H1 (cell line): ENCODE measurements at regions of chr16 and their contacts with region 1.

Region 1: DNA sequence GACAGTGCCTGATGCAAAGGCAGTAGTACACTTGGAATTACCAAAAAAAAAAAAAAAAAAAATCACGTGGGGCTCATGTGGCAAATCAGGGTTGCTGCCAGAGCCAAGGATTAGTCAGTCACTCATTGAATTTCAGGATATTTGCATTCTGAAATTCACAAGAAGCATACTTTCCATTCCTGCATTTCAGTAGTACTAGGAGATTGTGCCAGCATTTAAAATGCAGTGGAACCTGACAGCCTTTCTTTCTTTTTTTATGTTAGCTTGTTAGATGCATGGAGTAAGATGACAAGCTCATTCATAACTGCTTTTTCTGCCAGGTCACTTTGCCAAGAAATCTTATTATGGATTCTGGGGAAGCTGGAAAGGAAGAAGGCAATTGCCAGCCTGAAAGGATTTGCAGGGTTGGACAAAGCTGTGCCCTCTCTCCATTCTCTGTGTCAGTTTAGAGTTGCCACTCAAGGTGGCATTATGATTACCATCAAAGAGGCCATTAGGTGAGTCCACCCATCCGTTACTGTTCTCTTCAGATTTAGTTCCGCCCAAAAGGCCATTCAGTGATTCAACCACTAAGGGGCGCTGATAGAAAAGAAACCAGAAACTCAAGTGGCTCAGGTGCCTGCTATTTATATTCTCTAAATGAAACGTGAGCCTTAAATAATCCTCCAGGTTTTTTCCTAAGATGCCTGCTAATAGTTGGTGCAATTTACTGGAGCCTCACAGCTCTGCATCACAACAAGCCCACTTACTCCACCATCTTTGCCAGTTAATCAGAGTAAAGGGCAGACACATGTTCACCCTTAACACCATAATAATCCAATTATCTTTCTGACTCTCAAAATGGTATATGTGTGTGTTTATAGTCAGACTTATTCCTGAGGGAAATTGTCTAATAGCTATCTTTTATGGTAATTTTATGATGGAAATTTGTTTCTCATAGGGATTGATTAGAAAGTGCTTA is 59.0 kb downstream of the TANGO6 start:
- DNase-seq: peak in 1 of 2 experiments; percentile 63
- H3K4me3 ChIP-seq: no peak overlapping the region
- H3K27ac ChIP-seq: no peak overlapping the region
- H3K4me1 ChIP-seq: 0 out of 7 replicates have a peak, but pooled peaks cover 0 to 1% (median 0%) of the 10 kb centered on the region in 4 experiments
- H3K27me3 ChIP-seq: no peaks in the 10 kb centered on the region
- CTCF ChIP-seq: peak in 2 of 3 experiments; percentile 74 to 86; a peak in 3 of 4 replicates
- EP300 ChIP-seq: no peak
- POLR2A ChIP-seq: no peak
- RAD21 ChIP-seq: peak; percentile 96 to 98

Region 2: GRCh38 chr16:68843482-68844210 is 58.6 kb before region 1 on chr16 and contains the start of gene TANGO6:
- CTCF ChIA-PET with region 1: interaction called, 17 read pairs
- POLR2A ChIA-PET with region 1: no interaction called
- DNase-seq: peak; percentile 49 to 94
- H3K4me3 ChIP-seq: peak within 1 kb of the TSS; percentile 72 to 91 (median 80)
- H3K27ac ChIP-seq: peak within 1 kb of the TSS; percentile 69
- H3K4me1 ChIP-seq: no peaks in the 10 kb centered on the region
- H3K27me3 ChIP-seq: no peaks in the 10 kb centered on the region
- CTCF ChIP-seq: peak; percentile 52 to 63 (median 58)
- EP300 ChIP-seq: no peak
- POLR2A ChIP-seq: peak; percentile 82 to 83
- RAD21 ChIP-seq: peak; percentile 34 to 40; a peak in 3 of 4 replicates
- total RNA-seq, gene TANGO6: 15.8 and 19.5 TPM in 2 replicates

Region 3: DNA sequence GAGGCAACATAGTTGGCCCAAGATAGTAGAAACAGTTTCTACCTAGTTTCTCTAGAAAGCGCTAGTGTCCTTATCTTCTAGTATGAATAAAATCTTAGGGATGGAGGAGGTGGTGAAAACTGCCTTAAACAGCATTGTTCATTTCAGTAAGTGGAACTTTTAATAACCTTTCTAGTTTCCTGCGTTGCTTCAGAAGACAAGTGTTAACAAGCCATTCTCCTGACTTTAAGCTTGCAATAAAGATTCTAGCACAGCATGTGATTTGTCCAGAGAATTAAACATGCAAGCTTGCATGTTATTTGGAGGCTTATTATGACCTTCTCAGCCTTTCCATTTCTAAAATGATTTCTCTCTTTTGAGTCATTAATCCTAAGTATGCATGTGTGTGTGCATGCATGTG is 13.3 kb after region 1 on chr16:
- CTCF ChIA-PET with region 1: interaction called, 15 read pairs
- POLR2A ChIA-PET with region 1: no interaction called
- DNase-seq: no peak
- H3K4me3 ChIP-seq: no peak overlapping the region
- H3K27ac ChIP-seq: no peak overlapping the region
- H3K4me1 ChIP-seq: peaks cover 0 to 2% (median 0%) of the 10 kb centered on the region in 4 experiments; a peak in 1 of 7 replicates
- H3K27me3 ChIP-seq: no peaks in the 10 kb centered on the region
- CTCF ChIP-seq: no peak
- EP300 ChIP-seq: no peak
- POLR2A ChIP-seq: no peak
- RAD21 ChIP-seq: no peak

Region 4: DNA sequence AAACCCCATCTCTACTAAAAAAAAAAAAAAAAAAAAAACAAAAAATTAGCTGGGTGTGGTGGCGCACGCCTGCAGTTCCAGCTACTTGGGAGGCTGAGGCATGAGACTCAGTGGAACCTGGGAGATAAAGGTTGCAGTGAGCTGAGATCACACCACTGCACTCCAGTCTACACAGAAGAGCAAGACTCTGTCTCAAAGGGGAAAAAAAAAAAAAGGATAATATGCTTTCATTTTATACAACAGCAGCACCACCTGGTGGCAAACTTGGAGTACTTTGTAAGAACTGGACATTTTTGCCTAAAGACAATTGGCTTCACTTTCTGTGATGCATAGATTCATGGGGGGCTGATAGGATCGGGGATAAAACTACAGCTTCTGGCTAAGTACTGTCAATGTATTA is 221.6 kb after region 1 on chr16:
- CTCF ChIA-PET with region 1: interaction called, 85 read pairs
- POLR2A ChIA-PET with region 1: interaction called, 4 read pairs
- DNase-seq: no peak
- H3K4me3 ChIP-seq: no peak overlapping the region
- H3K27ac ChIP-seq: no peak overlapping the region
- H3K4me1 ChIP-seq: no peaks in the 10 kb centered on the region
- H3K27me3 ChIP-seq: no peaks in the 10 kb centered on the region
- CTCF ChIP-seq: peak in 2 of 3 experiments; percentile 68; a peak in 3 of 4 replicates
- EP300 ChIP-seq: no peak
- POLR2A ChIP-seq: no peak
- RAD21 ChIP-seq: peak; percentile 81 to 85